H1 (cell line): ENCODE measurements at regions of chr11 and their contacts with region 1.

Region 1: DNA sequence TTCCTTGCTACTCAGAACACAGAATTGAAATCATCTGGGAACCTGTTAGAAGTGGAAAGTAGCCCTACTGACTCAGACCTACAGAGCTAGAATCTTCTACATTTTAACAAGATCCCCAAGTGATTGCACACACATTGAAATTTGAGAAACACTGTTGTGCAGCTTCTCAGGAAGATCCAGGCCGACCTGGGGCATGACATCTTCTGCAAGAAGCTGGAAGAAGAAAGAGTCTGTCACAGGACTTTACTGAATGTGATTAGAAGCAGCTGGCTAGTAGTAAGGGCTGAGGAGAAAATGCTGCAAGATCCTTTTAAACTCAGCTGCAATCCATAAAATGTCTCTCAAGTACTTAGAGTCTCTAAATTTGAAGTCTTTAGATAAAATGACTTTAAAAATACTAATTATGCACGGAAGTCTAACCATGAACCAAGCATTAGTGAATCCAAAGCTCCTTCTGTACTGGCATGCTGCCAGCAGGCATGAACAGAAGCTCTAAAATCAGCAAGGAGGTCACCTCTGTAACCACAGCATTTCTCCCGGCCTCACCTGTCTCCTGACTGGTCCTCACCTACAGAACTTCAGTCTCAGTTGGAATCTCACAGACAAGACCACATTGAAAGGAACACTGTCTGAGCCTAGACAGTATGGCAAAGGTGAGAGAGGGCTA is 85.0 kb downstream of the SERGEF start:
- DNase-seq: no peak
- H3K4me3 ChIP-seq: no peak overlapping the region
- H3K27ac ChIP-seq: no peak overlapping the region
- H3K4me1 ChIP-seq: peaks cover 0 to 8% (median 2%) of the 10 kb centered on the region in 4 experiments; a peak in 2 of 7 replicates
- H3K27me3 ChIP-seq: no peaks in the 10 kb centered on the region
- CTCF ChIP-seq: no peak
- EP300 ChIP-seq: no peak
- POLR2A ChIP-seq: no peak
- RAD21 ChIP-seq: no peak

Region 2: GRCh38 chr11:17890325-17890724 is 37.5 kb before region 1 on chr11:
- CTCF ChIA-PET with region 1: interaction called, 15 read pairs
- POLR2A ChIA-PET with region 1: no interaction called
- DNase-seq: no peak
- H3K4me3 ChIP-seq: no peak overlapping the region
- H3K27ac ChIP-seq: no peak overlapping the region
- H3K4me1 ChIP-seq: peaks cover 2 to 12% (median 3%) of the 10 kb centered on the region in 4 experiments; a peak in 3 of 7 replicates
- H3K27me3 ChIP-seq: no peaks in the 10 kb centered on the region
- CTCF ChIP-seq: peak in 1 of 3 experiments; percentile 31; a peak in 1 of 4 replicates
- EP300 ChIP-seq: no peak
- POLR2A ChIP-seq: no peak
- RAD21 ChIP-seq: peak; percentile 12 to 26; a peak in 2 of 4 replicates

Region 3: DNA sequence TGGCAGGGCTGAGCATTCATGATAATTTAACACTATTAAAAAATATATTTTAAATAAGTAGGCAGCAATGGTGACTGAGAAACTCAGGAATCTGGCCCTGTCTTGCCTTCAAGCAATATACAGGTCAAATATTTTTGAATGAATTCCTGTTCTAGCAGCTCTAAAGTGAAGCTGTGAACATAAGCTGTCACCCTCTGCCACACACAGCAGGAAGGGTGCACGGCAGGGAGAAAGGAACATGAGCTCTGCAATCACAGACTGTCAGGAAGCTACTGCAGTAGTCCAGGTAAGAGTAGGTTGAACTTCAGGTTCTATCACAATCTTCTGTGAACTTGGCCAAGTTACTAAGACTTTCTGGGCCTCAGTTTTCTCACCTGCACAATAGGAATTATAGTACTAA is 29.7 kb before region 1 on chr11:
- CTCF ChIA-PET with region 1: interaction called, 15 read pairs
- POLR2A ChIA-PET with region 1: no interaction called
- DNase-seq: no peak
- H3K4me3 ChIP-seq: no peak overlapping the region
- H3K27ac ChIP-seq: no peak overlapping the region
- H3K4me1 ChIP-seq: 0 out of 7 replicates have a peak, but pooled peaks cover 0 to 2% (median 0%) of the 10 kb centered on the region in 4 experiments
- H3K27me3 ChIP-seq: no peaks in the 10 kb centered on the region
- CTCF ChIP-seq: no peak
- EP300 ChIP-seq: no peak
- POLR2A ChIP-seq: no peak
- RAD21 ChIP-seq: no peak

Region 4: DNA sequence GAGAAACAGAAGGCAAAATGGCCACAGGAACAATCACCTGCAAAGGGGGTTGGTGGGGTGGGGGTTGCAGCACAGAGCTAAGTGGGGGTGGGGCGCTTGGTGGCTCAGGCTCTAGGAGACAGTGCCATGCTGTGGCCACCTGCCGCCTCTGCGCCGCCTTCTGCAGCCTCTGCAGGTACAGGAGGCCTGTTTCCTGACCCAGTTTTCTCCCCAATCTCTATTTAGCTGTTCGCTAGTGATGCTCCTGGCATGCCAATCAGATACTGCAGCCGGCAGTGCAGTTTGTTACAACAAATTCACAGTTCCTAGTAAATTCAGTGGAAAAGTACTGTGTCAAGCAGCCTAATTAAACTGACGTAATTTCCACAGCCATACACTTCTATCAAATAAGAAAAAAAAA is 21.4 kb before region 1 on chr11:
- CTCF ChIA-PET with region 1: interaction called, 16 read pairs
- POLR2A ChIA-PET with region 1: interaction called, 4 read pairs
- DNase-seq: peak; percentile 70 to 73
- H3K4me3 ChIP-seq: peak overlapping the region in 1 of 4 experiments; percentile 20; a peak in 1 of 8 replicates
- H3K27ac ChIP-seq: no peak overlapping the region
- H3K4me1 ChIP-seq: peaks cover 4 to 10% (median 6%) of the 10 kb centered on the region in 4 experiments; a peak in 6 of 7 replicates
- H3K27me3 ChIP-seq: no peaks in the 10 kb centered on the region
- CTCF ChIP-seq: peak; percentile 62 to 86 (median 67)
- EP300 ChIP-seq: no peak
- POLR2A ChIP-seq: no peak
- RAD21 ChIP-seq: peak; percentile 74 to 79